Panc1 (cell line): ENCODE measurements at regions of chr17 and their contacts with region 1.

Region 1: DNA sequence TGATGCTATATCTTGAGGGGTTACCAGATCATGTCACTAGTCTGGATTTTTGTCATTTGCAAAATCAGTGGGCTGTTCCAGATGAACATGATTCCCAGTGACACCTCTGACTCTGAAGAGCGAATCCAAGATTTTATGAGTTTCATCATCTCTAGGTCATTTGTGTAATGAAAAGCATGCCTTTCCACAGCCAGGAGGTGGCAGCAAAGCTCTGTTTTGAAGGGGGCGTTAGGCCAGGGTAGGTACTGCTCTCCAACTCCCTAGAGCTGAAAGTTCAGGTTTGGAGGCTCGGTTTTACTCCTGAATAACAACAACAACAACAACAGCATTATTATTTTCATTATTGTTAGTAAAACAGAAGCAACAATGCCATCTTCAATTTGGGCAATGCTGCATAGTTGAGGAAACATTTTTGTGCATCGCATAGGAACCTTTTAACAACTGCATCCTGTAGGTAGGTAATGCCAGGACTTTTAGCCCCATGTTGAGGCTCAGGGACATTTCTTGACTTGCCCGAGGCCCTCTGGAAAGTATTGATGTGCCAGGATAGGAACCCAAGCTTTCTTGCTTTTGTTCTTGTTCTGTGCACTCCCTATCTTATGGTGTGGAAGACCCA is 77.0 kb downstream of the MYH13 start:
- DNase-seq: peak; percentile 22
- ATAC-seq: no peak; the same call in 1 of the 2 replicates
- H3K4me3 ChIP-seq: no peak overlapping the region
- H3K27ac ChIP-seq: no peak overlapping the region
- H3K4me1 ChIP-seq: no peaks in the 10 kb centered on the region
- H3K27me3 ChIP-seq: no peaks in the 10 kb centered on the region; the same call in 1 of the 2 replicates
- CTCF ChIP-seq: peak; percentile 75

Region 2: DNA sequence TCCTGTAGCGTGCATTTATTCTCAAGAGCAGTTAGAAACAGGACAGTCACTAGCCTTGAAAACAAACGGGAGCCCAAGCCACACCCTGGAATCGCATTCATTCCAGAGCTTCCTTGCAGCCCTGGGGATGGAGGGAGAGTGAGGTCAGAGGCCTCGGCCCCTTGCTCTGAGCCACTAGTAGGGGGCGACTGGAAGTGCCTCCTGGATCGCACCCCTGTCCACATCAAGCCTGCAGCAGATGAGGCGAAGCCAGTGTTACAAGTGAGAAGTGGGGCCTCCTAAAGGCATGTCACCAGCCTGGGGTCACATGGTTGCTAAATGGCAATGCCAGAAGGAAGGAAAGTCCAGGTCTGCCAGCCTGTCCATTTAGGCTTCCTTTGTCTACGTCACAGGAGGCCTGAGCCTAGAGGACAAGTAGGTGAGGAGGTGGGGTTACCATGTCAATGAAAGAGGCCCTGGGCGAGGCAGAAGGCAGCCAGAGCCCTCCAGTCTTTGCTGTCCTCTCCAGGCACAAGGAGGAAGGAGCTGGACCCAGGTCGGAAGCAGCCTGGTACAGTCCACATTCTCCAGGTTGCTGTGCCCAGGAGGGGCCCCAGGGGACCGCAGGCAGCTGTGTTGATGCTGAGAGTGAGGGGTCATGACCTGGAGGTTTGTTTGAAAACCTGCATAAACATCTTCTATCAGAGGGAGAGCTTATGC is 387.8 kb before region 1 on chr17:
- CTCF ChIA-PET with region 1: interaction called, 10 read pairs
- POLR2A ChIA-PET with region 1: no interaction called
- in situ Hi-C with region 1: no loop called
- intact Hi-C with region 1: no loop called
- DNase-seq: no peak
- ATAC-seq: no peak
- H3K4me3 ChIP-seq: no peak overlapping the region
- H3K27ac ChIP-seq: no peak overlapping the region
- H3K4me1 ChIP-seq: no peaks in the 10 kb centered on the region
- H3K27me3 ChIP-seq: no peaks in the 10 kb centered on the region; the same call in 1 of the 2 replicates
- CTCF ChIP-seq: no peak